PC-9 (cell line): ENCODE measurements at regions of chr13 and their contacts with region 1.

Region 1: DNA sequence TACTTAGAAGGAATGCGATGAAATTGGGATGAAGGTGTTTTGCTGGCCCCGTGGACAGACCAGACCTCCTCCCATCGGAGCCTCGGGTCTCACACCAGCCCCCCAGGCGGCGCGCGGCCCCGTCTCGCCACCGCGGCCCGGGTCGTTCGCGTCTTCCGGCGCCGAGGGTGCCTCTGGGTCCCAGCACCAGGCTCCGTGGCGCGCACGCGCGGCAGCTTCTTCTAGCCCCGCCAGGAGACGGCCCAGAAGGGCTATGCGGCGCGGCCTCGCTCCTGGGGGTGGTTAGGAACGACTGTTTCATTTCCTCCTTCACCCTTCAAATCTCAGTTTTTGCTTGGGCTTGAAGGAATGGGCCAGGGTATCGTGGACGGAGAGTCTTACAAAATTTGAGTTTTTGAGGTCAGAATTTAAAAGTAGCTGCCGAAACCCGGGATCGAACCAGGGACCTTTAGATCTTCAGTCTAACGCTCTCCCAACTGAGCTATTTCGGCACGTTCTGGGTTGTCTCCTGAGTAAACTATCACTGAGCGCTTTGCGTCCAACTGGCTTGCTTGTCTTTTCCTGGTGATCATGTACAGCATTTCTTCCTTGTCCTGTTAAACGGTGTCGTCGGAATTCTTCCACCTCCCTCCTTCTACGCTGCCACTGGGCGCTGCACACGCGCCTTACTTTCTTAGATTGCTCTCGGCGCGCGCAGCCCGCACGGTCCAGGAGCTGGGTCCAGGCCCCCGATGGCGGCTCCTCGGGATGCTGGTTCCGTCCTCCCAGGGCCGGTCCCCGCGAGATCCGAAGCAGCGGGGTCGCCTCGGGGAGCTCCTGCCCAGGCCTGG is 46.5 kb downstream of the TGDS start:
- DNase-seq: peak; percentile 88 to 90
- H3K4me3 ChIP-seq: peak overlapping the region; percentile 92
- H3K27ac ChIP-seq: peak overlapping the region; percentile 70
- H3K4me1 ChIP-seq: peaks cover 22% of the 10 kb centered on the region
- H3K27me3 ChIP-seq: no peaks in the 10 kb centered on the region
- CTCF ChIP-seq: 0 out of 2 replicates have a peak, but pooled peaks have one; percentile 23

Region 2: GRCh38 chr13:94435604-94436226 is 113.7 kb before region 1 on chr13:
- CTCF ChIA-PET with region 1: interaction called, 3 read pairs
- POLR2A ChIA-PET with region 1: no interaction called
- intact Hi-C with region 1: loop called (anchors 5 kb)
- DNase-seq: no peak
- H3K4me3 ChIP-seq: no peak overlapping the region
- H3K27ac ChIP-seq: no peak overlapping the region
- H3K4me1 ChIP-seq: no peaks in the 10 kb centered on the region
- H3K27me3 ChIP-seq: no peaks in the 10 kb centered on the region
- CTCF ChIP-seq: peak; percentile 77

Region 3: GRCh38 chr13:94595950-94596574 is 46.6 kb after region 1 on chr13 and contains the start of gene TGDS:
- CTCF ChIA-PET with region 1: no interaction called
- POLR2A ChIA-PET with region 1: no interaction called
- intact Hi-C with region 1: loop called (anchors 1 kb)
- DNase-seq: peak; percentile 84 to 88
- H3K4me3 ChIP-seq: peak within 1 kb of the TSS; percentile 84
- H3K27ac ChIP-seq: peak within 1 kb of the TSS; percentile 41; the same call in 1 of the 2 replicates
- H3K4me1 ChIP-seq: peaks cover 21% of the 10 kb centered on the region
- H3K27me3 ChIP-seq: no peaks in the 10 kb centered on the region
- CTCF ChIP-seq: no peak
- total RNA-seq, gene TGDS: 6.2 and 7.0 TPM in 2 replicates

Region 4: GRCh38 chr13:94601446-94602431 is 52.3 kb after region 1 on chr13 and contains the start of gene GPR180:
- CTCF ChIA-PET with region 1: interaction called, 5 read pairs
- POLR2A ChIA-PET with region 1: no interaction called
- intact Hi-C with region 1: loop called (anchors 1 kb)
- DNase-seq: peak; percentile 92 to 99
- H3K4me3 ChIP-seq: peak within 1 kb of the TSS; percentile 96
- H3K27ac ChIP-seq: no peak within 1 kb of the TSS
- H3K4me1 ChIP-seq: peaks cover 11% of the 10 kb centered on the region
- H3K27me3 ChIP-seq: no peaks in the 10 kb centered on the region
- CTCF ChIP-seq: no peak
- total RNA-seq, gene GPR180: 2.6 and 4.0 TPM in 2 replicates